Left lung (tissue), 14 donors: ENCODE measurements at regions of chr9 and their contacts with region 1.

Region 1: DNA sequence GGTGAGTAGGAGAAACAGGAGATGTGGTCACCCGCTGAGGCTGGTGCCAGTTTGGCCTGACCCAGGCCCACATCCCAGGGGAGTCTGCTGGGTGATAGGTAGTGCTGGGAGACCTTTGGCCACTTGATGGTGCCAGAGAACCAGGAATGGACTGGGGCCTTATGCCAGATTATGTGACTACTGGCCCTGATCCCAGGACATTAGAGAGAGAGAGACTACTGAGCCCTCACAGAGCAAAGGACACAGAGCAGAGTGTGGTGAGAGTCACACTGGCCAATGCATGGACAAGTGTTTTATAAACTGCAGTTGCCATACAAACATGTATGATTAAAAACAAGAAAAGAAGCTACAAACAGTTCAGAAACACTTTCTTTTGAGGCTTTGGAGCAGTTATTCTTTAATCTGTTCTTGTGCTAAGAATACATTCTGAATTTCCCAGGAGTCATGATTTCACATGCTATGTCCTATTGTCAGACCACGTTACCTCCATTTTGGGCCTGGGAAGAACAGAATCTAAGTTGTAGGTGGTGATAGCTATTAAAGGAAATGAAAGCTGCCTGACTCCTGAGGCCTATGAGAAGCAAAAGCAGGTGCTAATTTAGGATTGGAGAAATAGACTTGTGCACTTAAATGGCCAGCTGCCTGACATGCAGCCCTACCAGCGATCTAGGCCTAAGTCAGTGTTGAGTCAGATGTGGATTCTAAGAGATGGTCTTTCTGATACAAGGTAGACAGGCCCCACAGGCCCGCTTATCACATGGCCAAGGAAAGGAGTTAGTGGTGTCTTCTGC is 32.6 kb upstream of the TMOD1 start:
- DNase-seq: peak in 3 of 4 donors; percentile 38 to 76 (median 70)
- ATAC-seq: peak; percentile 99
- H3K4me3 ChIP-seq: no peak overlapping the region
- H3K27ac ChIP-seq: no peak overlapping the region
- H3K4me1 ChIP-seq: no peaks in the 10 kb centered on the region
- H3K27me3 ChIP-seq: no peaks in the 10 kb centered on the region
- CTCF ChIP-seq: peak; percentile 48 to 61

Region 2: GRCh38 chr9:97543565-97543964 is 74.7 kb after region 1 on chr9:
- intact Hi-C with region 1: no loop called
- DNase-seq: no peak
- ATAC-seq: no peak
- H3K4me3 ChIP-seq: no peak overlapping the region
- H3K27ac ChIP-seq: no peak overlapping the region
- H3K4me1 ChIP-seq: no peaks in the 10 kb centered on the region
- H3K27me3 ChIP-seq: no peaks in the 10 kb centered on the region
- CTCF ChIP-seq: no peak

Region 3: DNA sequence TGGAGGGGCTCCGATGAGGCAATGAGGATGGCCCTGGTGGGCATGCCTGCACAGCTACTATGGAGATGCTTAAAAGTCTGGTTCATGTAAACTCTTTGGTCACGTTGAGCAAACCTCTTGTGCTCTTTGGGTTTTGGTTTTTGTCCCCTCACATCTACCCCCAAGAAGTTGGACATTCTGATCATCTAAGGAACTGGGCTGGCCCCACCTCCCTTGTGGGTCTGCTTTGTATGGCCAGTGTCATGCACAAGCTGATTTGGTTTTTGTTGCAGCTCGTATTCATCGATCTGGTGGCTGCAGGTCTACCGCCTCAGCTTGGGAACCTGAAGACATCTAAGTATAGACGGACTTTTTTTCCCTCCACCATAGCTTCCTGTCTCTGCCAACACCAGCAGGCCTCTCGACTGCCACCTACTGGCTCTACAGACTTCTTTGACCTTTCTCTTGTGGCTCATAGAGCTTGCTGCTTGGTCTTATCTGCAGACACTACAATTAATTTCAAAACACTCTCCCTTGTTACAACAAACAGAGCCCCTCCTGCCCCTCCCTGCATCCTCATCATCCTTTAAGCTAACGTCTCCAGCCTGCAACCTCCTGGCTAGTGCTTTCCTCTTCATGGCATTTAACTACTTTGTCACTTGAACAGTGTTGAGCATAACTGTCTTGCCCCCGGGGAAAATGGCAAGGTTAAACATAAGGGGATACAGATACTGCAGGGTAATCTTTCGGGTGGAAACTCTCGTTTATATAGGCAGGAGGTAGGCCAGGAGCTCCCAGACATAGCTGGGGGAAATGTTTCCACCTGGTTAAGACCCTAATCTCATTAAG is 129.8 kb after region 1 on chr9:
- intact Hi-C with region 1: loop called in 1 of 2 experiments (anchors 5 kb)
- DNase-seq: peak in 3 of 4 donors; percentile 42 to 78 (median 62)
- ATAC-seq: peak; percentile 96
- H3K4me3 ChIP-seq: no peak overlapping the region
- H3K27ac ChIP-seq: no peak overlapping the region
- H3K4me1 ChIP-seq: peaks cover 2 to 6% of the 10 kb centered on the region in 2 donors
- H3K27me3 ChIP-seq: no peaks in the 10 kb centered on the region
- CTCF ChIP-seq: peak; percentile 67 to 82